Activated CD4-positive, alpha-beta memory T cell treated with anti-CD3 and anti-CD28 coated beads for 36 hours (primary cell): ENCODE measurements at regions of chr11 and their contacts with region 1.

Region 1: GRCh38 chr11:65418711-65419459 is 3.7 kb upstream of the NEAT1 start:
- DNase-seq: peak; percentile 97
- H3K4me3 Mint-ChIP-seq: peak overlapping the region; percentile 97
- H3K27ac Mint-ChIP-seq: peak overlapping the region; percentile 100
- H3K4me1 Mint-ChIP-seq: peaks cover 47% of the 10 kb centered on the region
- H3K27me3 Mint-ChIP-seq: peaks cover 12% of the 10 kb centered on the region

Region 2: DNA sequence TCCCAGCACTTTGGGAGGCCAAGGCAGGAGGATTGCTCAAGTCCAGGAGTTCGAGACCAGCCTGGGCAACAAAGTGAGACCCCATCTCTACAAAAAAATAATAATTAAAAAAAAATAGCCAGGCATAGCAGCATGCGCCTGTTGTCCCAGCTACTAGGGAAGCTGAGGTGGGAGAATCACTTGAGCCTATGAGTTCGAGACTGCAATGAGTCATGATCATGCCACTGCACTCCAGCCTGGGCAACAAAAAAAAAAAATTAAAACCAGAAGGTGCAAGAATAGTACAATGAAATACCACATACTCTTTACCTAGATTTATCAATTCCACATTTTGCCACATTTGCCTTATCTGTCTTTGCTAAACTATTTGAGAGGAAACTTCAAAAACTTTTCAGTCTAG is 77.0 kb before region 1 on chr11:
- CTCF ChIA-PET with region 1: no interaction called
- POLR2A ChIA-PET with region 1: no interaction called
- intact Hi-C with region 1: no loop called
- DNase-seq: no peak
- H3K4me3 Mint-ChIP-seq: no peak overlapping the region
- H3K27ac Mint-ChIP-seq: no peak overlapping the region
- H3K4me1 Mint-ChIP-seq: peaks cover 23% of the 10 kb centered on the region
- H3K27me3 Mint-ChIP-seq: no peaks in the 10 kb centered on the region

Region 3: DNA sequence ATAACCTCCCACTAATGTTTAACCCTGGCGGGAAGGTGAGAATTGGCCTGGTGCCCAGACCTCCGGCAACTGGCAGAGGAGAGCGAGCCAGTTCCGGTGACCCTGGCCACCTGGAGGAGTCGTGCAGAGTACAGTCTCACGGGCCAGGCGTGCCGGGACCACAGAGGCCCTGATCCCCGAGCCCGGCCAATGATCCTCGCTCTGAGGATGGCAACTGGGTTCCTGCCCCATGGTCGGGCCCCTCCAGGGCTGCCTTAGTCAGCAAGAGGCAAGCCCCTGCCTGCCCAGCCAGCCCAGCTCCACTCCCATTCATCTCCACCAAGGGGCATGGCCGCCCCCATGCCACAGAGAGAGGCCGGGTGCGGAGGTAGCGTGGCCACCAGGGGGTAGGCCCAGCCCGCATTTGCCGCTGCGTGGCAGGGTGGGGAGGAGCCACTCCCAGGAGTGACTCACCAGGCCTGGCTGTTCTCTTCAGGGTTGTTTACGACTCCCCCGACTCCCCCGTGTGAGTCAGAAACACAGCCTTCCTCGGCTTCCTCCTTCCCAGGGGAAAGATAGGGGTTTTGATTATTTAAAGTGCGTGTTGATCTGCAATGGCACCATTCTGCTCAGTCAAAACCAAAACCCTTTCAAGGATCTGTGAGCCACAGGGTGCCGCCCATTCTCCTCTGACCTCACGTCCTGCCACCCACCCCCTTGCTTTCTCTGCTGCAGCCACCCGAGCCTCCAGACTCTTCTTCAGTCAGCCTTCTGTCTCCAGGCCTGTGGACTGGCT is 36.7 kb before region 1 on chr11 and contains the start of gene SLC25A45:
- CTCF ChIA-PET with region 1: interaction called, 37 read pairs
- POLR2A ChIA-PET with region 1: interaction called, 26 read pairs
- intact Hi-C with region 1: loop called (anchors 1 kb)
- DNase-seq: peak; percentile 97
- H3K4me3 Mint-ChIP-seq: peak within 1 kb of the TSS; percentile 85
- H3K27ac Mint-ChIP-seq: peak within 1 kb of the TSS; percentile 97
- H3K4me1 Mint-ChIP-seq: peaks cover 41% of the 10 kb centered on the region
- H3K27me3 Mint-ChIP-seq: no peaks in the 10 kb centered on the region
- total RNA-seq, gene SLC25A45: 14.4 to 16.1 TPM

Region 4: DNA sequence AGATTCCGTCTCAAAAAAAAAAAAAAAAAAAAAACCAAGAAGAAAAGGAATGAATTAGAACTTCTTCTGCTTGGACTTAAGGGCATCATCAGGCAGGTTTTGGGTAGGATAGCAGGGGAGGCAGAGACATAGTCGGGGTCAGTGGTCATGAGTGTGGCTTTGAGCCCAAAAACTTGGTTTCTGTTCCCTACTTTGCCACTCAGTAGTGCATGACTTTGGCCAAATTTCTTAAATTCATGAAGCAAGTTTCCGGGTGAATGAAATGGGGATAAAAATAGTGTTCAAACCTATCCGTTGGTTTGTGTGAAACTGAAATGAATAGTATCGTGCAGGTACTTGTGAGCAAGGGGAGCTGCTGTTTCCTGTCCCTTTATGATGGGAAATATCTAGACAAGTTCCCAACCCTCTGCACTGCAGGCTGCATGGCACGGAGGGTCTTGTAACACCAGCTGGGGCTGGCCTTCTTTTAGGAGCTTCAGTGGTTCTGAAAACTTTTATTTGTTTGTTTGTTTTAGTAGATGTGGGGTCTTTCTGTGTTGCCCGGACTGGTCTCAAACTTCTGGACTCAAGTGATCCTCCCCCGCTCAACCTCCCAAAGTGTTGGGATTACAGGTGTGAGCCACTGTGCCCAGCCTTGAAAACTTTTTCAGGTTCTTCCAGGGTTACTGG is 22.1 kb after region 1 on chr11:
- CTCF ChIA-PET with region 1: interaction called, 7 read pairs
- POLR2A ChIA-PET with region 1: interaction called, 11 read pairs
- intact Hi-C with region 1: no loop called
- DNase-seq: peak; percentile 25
- H3K4me3 Mint-ChIP-seq: peak overlapping the region; percentile 34
- H3K27ac Mint-ChIP-seq: peak overlapping the region; percentile 90
- H3K4me1 Mint-ChIP-seq: peaks cover 65% of the 10 kb centered on the region
- H3K27me3 Mint-ChIP-seq: no peaks in the 10 kb centered on the region

Region 5: DNA sequence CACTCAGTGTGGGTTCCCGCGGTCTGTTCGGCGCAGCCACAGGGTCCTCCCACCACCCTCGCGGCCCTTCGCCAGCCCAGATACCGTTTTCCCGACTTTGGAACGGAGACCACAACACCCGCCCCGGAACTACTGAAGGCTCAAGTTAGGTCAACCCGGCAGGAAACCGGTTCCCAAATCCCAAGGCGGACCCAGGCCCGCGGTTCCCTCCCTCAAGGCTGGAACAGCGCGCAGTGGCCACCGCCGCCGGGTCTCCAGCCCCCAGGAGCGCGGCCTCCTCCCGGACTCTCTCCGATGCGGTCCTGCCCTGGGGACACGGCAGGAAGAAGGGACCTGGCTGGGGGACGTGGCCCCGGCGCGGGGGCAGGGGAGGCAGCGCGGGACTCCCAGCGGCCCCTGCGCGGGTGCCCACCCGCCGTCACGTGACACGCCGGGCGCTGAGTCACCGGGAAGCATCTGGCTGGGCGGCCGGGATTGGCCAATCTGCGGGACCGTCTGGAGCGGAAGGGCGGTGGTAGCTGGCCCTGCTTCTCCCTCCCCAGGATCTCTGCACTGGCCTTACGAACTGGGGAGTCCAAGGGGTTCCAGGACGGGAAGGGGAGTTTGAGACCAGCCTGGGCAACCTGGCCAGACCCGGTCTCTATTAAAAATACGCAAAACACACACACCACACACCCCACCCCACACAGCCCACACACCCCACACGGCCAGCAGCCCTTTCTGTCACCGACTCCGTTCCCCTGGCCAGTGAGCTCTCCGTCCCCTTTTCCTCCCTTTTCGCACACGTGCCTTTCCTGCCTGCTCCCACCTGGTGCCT is 58.5 kb after region 1 on chr11:
- CTCF ChIA-PET with region 1: interaction called, 26 read pairs
- POLR2A ChIA-PET with region 1: interaction called, 258 read pairs
- intact Hi-C with region 1: loop called (anchors 1 kb)
- DNase-seq: peak; percentile 96
- H3K4me3 Mint-ChIP-seq: peak overlapping the region; percentile 91
- H3K27ac Mint-ChIP-seq: peak overlapping the region; percentile 95
- H3K4me1 Mint-ChIP-seq: peaks cover 19% of the 10 kb centered on the region
- H3K27me3 Mint-ChIP-seq: no peaks in the 10 kb centered on the region

Region 6: DNA sequence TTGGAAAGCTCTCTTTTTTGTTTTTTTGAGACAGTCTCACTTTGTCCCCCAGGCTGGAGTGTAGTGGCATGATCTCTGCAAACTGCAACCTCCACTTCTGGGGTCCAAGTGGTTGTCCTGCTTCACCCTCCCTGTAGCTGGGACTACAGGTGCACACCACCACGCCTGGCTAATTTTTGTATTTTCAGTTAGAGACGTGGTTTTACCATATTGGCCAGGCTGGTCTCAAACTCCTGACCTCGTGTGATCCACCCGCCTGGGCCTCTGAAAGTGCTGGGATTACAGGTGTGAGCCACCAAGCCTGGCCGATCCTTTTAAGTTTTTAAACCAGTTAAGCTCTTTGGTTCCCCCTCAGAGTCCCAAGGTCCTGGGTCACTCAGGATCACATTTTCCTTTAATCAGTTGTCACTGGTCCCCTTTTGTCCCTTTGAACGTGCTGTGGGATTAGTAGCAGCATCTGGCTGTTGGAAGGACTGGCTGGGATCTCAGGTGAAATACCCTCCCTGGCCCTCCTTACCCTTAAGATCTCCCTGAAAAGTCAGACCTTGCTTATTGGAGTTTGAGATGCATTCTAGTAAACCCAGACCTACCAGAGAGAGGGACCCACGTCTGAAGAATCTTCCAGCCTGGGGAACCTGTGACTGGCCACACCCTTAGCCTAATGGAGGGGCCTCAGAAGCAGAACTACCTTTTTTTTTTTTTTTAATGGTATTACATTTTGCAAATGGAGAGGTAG is 88.1 kb after region 1 on chr11:
- CTCF ChIA-PET with region 1: interaction called, 257 read pairs
- POLR2A ChIA-PET with region 1: interaction called, 4,089 read pairs
- intact Hi-C with region 1: loop called (anchors 1 kb)
- DNase-seq: peak; percentile 69
- H3K4me3 Mint-ChIP-seq: no peak overlapping the region
- H3K27ac Mint-ChIP-seq: no peak overlapping the region
- H3K4me1 Mint-ChIP-seq: peaks cover 44% of the 10 kb centered on the region
- H3K27me3 Mint-ChIP-seq: peaks cover 4% of the 10 kb centered on the region

Region 7: GRCh38 chr11:65569973-65570918 is 151.4 kb after region 1 on chr11 and contains the start of gene ZNRD2:
- CTCF ChIA-PET with region 1: interaction called, 4 read pairs
- POLR2A ChIA-PET with region 1: interaction called, 10 read pairs
- intact Hi-C with region 1: loop called (anchors 2 kb)
- DNase-seq: peak; percentile 100
- H3K4me3 Mint-ChIP-seq: peak within 1 kb of the TSS; percentile 100
- H3K27ac Mint-ChIP-seq: peak within 1 kb of the TSS; percentile 95
- H3K4me1 Mint-ChIP-seq: peaks cover 62% of the 10 kb centered on the region
- H3K27me3 Mint-ChIP-seq: no peaks in the 10 kb centered on the region
- total RNA-seq, gene ZNRD2: 48.1 to 51.1 TPM